Heart left ventricle (tissue), 16 donors: ENCODE measurements at regions of chr12 and their contacts with region 1.

Region 1: DNA sequence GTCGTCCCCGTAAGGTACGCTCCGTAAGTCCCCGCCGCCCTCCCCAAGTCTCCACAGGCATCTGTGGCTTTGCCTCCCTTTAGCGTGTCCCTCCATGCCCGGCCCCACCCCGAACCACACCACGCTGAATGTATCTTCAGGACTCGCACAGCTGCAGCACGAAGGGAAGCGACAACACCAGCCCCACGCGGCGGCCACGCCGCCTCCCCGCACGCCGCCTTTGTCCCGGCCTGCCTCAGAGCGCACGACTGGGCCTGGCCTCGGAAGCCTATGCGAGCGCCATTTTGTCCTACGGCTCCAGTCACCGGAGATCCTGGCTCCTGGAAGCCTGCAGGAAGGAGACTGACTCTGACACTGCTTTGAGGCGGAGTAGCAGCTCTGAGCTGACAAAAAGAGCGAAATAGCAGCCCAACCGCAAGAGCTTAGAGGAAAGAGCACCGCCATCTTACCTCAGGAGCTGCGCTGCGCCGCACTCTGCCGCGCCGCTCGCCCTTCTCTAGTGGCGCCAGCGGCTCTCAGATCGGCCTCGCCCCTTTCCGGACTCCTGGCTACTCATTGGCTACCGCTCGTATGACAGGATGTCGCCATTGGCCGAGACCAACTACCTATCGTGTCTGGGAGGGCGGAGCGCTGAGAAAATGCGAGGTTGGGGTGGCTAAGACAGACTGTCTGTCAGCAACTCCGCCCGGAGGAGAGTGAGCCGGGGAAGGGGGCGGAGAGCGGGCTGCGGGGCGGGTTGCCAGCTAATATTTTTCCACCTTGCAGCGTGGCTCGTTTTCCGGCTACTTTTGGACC is at the start of gene KANSL2:
- DNase-seq: peak; percentile 98 to 99 (median 99)
- ATAC-seq: peak; percentile 98 to 100 (median 99)
- H3K4me3 ChIP-seq: peak within 1 kb of the TSS; percentile 77 to 99 (median 92)
- H3K27ac ChIP-seq: peak within 1 kb of the TSS; percentile 83 to 99 (median 95)
- H3K4me1 ChIP-seq: peaks cover 6 to 51% (median 42%) of the 10 kb centered on the region in 12 donors
- H3K27me3 ChIP-seq: no peaks in the 10 kb centered on the region
- CTCF ChIP-seq: no peak
- POLR2A ChIP-seq: peak; percentile 93 to 99
- total RNA-seq, gene KANSL2: 20.1 to 34.4 (median 24.0) TPM

Region 2: DNA sequence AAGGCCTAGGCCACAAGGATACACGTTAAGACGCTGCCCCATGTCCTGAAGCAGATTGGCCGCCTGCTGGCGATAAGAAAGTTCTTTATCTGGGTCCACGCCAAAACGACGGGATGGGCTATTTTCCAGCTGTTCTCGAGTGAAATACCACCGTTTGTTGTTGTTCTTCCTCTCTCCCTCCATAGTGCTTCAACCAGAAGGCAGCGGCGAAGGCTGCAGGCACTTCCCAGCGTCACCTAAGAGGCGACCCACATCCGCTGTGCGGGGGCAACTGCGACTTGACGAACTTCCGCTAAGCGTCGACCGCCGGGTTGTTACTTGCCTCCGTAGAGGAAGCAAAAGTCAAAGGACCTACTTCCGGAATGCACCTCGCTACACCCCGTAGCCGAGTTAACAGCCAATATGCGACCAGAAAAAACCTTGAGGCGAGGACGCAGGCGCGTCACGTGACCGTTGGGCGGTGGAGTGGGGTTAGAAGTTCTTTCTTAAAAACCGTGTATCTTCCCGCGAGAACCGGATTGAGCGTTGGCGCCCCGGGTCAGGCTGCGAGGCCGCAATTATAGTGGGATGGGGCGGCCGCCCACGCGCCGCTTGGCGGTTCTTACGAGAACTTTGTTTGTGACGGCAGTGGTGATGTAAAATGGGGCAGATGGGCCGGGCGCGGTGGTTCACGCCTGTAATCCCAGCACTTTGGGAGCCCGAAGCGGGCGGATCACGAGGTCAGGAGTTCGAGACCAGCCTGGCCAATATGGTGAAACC is 34.7 kb after region 1 on chr12 and contains the start of gene CCNT1:
- intact Hi-C with region 1: loop called in 3 of 10 experiments (anchors 1 to 2 kb)
- DNase-seq: peak; percentile 99
- ATAC-seq: peak; percentile 98 to 99 (median 98)
- H3K4me3 ChIP-seq: peak within 1 kb of the TSS; percentile 64 to 85 (median 76)
- H3K27ac ChIP-seq: peak within 1 kb of the TSS; percentile 78 to 97 (median 94)
- H3K4me1 ChIP-seq: peaks cover 11 to 36% (median 25%) of the 10 kb centered on the region in 12 donors
- H3K27me3 ChIP-seq: no peaks in the 10 kb centered on the region
- CTCF ChIP-seq: peak in 4 of 12 donors; percentile 13 to 36 (median 22)
- POLR2A ChIP-seq: peak in 1 of 2 donors; percentile 65
- total RNA-seq, gene CCNT1: 11.0 to 29.7 (median 18.1) TPM

Region 3: DNA sequence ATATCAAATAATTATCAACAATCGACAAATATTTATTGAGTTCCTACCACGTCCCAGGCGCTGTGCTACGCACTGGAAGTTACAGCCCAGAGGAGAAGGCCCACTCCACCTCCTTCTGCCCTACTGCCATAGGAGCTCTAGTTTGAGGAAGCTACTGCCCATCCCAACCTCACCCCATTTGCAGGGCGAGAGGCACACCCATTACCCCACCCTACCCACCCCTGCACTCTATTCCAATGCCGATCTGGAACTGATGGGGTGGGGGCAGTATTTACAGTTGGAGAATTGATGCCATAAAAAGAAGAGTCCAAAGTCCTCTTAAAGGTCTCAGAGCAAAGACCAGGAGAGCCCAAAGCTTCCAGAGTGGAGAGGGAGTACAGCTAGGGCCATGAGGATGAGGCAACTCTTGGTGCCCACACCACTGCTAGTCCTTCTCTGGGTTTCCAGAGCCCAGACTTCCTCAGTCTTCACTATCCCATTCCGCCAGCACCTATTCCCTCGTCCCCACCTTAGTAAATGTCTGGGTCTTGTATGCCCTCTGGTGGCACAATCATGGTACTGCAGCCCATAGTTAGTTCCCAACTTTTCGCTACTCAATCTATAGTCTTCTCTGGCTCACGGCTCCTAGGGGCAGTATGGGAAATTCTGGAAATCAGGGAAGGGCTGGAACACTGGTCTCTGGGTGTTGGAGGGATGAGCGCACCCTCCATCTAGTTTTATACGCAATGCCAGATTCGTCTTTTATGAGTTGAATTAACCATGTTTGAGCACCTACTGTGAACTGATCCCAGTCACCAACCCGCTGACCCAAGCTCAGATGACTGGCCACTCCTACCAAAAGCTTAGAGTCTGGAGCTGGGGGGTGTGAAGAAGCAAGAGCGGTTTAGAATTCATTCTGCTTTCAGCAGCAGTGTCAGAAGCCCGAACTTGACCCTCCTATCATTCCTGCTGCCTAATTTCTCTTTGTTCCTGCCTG is 113.8 kb after region 1 on chr12:
- intact Hi-C with region 1: no loop called
- DNase-seq: peak in 3 of 5 donors; percentile 53 to 64 (median 63)
- ATAC-seq: peak; percentile 82 to 90 (median 90)
- H3K4me3 ChIP-seq: no peak overlapping the region
- H3K27ac ChIP-seq: no peak overlapping the region
- H3K4me1 ChIP-seq: peaks cover 0 to 7% (median 1%) of the 10 kb centered on the region in 12 donors
- H3K27me3 ChIP-seq: peaks cover 0 to 9% (median 0%) of the 10 kb centered on the region in 9 donors
- CTCF ChIP-seq: peak; percentile 85 to 97 (median 95)
- POLR2A ChIP-seq: no peak

Region 4: DNA sequence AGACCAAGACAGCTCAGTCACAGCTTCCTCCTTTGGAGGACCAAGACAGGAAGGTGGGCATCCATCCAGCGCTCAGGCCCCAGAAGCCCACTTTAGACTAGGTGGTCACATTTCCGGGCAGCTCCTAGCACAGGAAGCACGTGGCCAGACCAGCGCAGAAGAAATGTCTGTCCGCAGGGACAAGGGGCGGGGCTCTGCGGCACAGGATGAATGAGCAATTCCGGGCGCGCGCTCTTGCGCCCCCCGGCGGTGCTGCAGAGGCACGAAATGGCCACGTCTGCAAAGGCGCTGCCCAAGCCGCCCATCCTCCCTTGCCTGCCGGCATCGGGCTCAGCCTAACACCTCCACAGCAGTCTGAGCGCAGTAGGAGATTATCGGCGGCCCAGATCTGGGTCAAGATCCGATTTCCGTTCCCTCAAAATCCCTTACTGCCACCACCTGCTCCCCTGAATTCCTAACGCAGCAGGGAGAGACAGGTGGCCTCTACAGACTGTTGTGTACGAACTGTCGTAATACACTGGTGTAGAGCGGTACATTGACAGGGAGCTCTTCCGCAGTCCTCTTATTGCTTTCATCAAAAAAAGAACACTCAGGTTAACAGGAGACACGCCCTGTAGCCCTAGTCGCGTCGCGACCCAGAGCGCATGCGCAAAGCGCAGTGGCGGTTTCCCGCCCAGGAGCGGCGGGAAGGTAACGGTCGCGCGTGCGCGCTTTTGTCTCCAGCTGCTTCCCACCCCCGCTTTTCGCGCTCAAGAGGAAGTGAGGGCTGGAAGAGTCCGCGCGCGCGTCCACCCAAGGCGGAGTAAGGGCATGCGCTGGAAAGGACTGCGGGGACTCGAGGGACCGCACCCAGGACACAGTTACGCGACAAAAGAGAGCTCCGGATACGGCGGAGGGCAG is 448.5 kb after region 1 on chr12:
- intact Hi-C with region 1: no loop called
- DNase-seq: peak; percentile 94 to 97 (median 96)
- ATAC-seq: peak; percentile 85 to 91 (median 86)
- H3K4me3 ChIP-seq: peak overlapping the region; percentile 54 to 100 (median 98)
- H3K27ac ChIP-seq: peak overlapping the region; percentile 93 to 100 (median 100)
- H3K4me1 ChIP-seq: peaks cover 4 to 44% (median 25%) of the 10 kb centered on the region in 12 donors
- H3K27me3 ChIP-seq: no peaks in the 10 kb centered on the region
- CTCF ChIP-seq: peak; percentile 85 to 98 (median 91)
- POLR2A ChIP-seq: no peak